AG04450 (cell line): ENCODE measurements at regions of chr1 and their contacts with region 1.

Region 1: DNA sequence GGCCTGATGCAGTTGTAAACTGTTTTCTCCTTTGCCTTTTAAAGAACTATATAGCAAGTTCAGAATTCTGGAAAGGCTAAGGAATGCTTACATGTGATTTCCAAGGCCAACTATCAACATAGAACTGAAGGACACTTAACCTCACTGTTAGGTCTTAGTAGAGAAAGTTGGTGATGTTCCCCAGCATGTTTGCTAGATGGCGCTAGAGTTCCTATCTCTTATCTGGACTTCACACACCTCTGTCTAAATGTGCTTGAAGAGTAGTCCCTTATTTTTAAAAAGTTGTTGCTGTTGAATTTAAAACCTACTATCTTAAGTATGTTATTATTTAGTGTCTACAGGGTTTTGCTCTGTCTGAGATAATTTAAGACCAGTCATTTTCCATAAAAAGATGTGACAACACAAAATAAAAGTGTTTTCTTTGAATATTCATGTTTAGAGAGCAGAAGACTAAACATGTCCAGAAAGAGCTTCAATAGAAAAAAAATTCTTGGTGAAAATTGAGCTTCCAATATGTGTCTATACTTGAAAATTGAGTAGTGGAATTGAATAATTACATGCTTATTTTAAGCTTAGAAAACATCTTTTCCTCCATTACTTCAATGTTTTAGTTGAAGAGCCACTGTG is 237.3 kb downstream of the S1PR1 start:
- DNase-seq: no peak
- H3K4me3 ChIP-seq: no peak overlapping the region
- H3K27ac ChIP-seq: no peak overlapping the region
- H3K27me3 ChIP-seq: no peaks in the 10 kb centered on the region
- CTCF ChIP-seq: peak; percentile 37

Region 2: GRCh38 chr1:100955322-100955721 is 518.8 kb before region 1 on chr1:
- CTCF ChIA-PET with region 1: no interaction called
- POLR2A ChIA-PET with region 1: no interaction called
- DNase-seq: peak; percentile 66
- H3K4me3 ChIP-seq: no peak overlapping the region
- H3K27ac ChIP-seq: no peak overlapping the region
- H3K27me3 ChIP-seq: no peaks in the 10 kb centered on the region
- CTCF ChIP-seq: no peak

Region 3: DNA sequence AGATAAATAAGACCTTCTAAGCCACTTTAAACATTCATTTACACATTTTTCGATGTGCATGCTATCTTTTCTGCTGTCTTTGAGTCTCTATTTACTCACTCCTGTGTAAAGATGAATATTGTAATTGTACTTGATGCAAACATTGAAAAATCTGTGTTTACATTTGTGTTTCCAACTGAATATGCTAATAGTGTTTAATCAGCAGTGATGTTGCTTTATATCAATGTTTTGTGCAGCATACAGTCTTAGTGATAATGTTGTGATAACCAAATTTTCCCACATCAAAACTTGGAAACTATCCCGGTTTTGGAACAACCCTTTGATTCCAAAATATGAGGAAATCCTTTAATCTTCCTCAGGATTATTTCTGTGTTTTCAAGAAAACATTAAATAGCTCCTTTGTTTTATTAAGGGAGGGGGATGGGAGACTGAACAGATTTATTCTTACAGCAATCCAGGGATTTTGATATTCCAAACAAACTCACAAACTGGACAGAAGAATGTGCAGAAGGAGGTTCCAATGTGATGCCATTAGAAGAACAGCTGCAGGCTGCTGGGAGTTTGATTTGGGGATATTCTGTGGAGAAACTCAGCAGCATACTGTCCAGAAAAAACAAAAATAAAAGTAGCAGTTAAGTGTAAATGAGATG is 10.7 kb after region 1 on chr1:
- CTCF ChIA-PET with region 1: interaction called, 18 read pairs
- POLR2A ChIA-PET with region 1: no interaction called
- DNase-seq: no peak
- H3K4me3 ChIP-seq: no peak overlapping the region
- H3K27ac ChIP-seq: no peak overlapping the region
- H3K27me3 ChIP-seq: no peaks in the 10 kb centered on the region
- CTCF ChIP-seq: no peak